Mammary epithelial cell (primary cell): ENCODE measurements at regions of chr5 and their contacts with region 1.

Region 1: DNA sequence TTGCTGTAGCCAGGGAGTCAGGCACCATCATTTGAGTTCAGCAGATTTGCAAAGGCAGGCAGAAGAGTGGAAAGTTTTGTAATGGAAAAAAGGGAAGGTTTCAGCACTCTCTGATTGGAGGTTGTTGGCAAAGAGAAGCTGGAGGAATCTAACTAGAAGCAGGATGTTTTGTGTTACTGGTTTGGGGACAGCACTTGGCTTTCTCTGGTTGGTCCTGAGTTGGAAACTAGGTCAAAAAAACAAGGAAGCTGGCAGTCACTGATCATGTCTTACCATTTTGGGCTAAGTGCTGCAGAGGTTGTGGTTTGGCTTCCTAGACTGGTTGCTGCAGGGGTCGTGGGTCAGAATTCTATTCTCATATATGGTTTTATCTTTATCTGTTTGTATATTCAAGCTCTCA is 189.8 kb downstream of the DRD1 start:
- DNase-seq: no peak
- H3K4me3 ChIP-seq: no peak overlapping the region
- H3K27ac ChIP-seq: no peak overlapping the region
- H3K4me1 ChIP-seq: no peaks in the 10 kb centered on the region
- H3K27me3 ChIP-seq: no peaks in the 10 kb centered on the region
- CTCF ChIP-seq: no peak

Region 2: DNA sequence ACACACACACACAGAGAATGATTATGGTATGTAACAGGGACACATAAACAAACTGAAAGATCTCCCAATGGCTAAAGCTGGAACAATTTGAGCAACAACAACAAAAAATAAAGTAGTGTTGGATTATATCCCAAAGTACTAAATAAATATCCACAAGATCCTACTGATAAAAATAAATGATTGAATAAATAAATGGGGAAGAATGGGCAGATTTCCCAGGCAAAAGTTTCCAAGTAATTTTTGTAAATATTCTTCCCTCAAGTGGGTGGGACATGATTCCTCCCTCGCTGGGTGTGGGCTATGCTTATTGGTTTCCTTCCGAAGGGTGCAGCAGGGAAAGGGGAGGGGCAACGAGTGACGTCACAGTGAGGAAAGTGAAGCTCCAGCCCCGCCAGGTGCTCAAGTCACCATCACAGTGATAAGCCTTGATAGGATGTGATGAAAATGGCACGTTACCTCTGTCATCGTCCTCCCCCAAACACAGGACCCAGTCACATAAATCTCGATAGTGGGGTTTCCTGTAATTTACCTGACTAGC is 105.5 kb before region 1 on chr5:
- CTCF ChIA-PET with region 1: no interaction called
- dilution Hi-C with region 1: loop called (anchors 5 kb)
- in situ Hi-C with region 1: no loop called
- intact Hi-C with region 1: no loop called
- DNase-seq: no peak
- H3K4me3 ChIP-seq: no peak overlapping the region
- H3K27ac ChIP-seq: no peak overlapping the region
- H3K4me1 ChIP-seq: no peaks in the 10 kb centered on the region
- H3K27me3 ChIP-seq: no peaks in the 10 kb centered on the region
- CTCF ChIP-seq: no peak

Region 3: DNA sequence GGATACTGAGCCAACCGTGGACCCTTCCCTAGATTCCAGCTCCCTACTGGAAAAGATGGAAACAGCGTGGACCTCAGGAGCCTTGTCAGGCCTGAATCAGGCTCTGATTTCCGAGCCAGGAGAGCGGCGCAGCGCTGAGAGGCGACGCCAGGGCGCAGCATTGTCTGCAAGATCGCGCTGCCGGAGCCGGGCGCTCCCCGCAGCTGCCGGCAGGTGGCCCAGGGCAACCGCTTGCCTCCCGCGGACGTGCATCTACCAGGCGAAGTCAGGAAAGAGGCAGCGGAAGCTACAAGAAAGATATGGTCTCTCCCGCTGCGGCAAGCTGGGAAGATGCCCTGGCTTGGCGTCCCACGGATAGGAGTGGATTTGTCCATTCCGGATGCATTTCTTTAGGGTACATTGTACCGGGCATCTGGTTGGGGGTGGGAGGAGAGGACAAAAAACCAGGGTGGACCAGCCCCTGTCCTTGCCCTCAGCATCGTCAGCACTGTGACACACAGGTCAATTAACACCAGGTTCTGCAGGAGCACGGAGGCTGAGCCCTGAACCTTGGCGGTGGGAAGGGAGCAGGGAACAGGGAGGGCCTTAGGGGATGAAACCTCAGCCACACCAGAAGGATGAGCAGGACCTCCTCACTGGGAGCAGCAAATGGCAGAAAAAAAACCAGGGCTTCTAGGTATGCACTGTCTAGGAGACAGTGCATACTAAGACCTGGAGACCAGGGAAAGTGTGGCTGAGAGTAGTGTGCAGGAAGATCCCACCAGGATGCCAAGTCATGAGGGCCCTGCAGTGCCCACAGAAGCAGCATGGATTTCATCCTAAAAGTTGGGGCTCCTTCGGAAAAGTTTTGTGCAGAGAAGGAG is 280.1 kb after region 1 on chr5:
- CTCF ChIA-PET with region 1: no interaction called
- dilution Hi-C with region 1: no loop called
- in situ Hi-C with region 1: no loop called
- intact Hi-C with region 1: no loop called
- DNase-seq: peak; percentile 66
- H3K4me3 ChIP-seq: no peak overlapping the region
- H3K27ac ChIP-seq: no peak overlapping the region
- H3K4me1 ChIP-seq: no peaks in the 10 kb centered on the region
- H3K27me3 ChIP-seq: no peaks in the 10 kb centered on the region
- CTCF ChIP-seq: peak; percentile 97 to 100